ENCODE measurements at regions of chr21 and their contacts with region 1.

Region 1: GRCh38 chr21:29351691-29352090 is 53.0 kb downstream of the BACH1 start:
- DNase-seq: no peak
- ATAC-seq: no peak
- H3K4me3 ChIP-seq: no peak overlapping the region
- H3K27ac ChIP-seq: no peak overlapping the region
- H3K4me1 ChIP-seq: no peaks in the 10 kb centered on the region
- CTCF ChIP-seq: no peak
- EP300 ChIP-seq: no peak
- POLR2A ChIP-seq: no peak
- RAD21 ChIP-seq: no peak

Region 2: DNA sequence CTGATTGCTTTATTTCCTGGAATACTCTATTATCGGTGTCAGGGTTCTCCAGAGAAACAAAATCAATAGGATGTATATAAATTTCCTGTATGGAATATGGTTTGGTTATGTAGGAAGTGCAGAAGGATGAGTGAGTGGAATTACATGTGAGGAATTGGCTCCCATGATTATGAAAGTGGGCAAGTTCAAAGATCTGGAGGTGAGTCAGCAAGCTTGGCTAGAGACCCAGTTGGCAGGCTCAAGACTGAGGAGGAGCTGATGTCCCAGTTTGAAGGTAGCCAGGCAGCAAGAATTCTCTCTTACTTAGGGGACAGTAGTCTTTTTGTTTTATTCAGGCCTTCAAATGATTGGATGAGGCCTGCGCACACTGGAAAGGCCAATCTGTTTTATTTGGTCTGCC is 163.7 kb before region 1 on chr21:
- CTCF ChIA-PET with region 1: interaction called, 15 read pairs
- POLR2A ChIA-PET with region 1: no interaction called
- DNase-seq: peak in 1 of 2 experiments; percentile 65
- ATAC-seq: peak; percentile 73 to 81
- H3K4me3 ChIP-seq: no peak overlapping the region
- H3K27ac ChIP-seq: peak overlapping the region; percentile 53 to 77; a peak in 5 of 6 replicates
- H3K4me1 ChIP-seq: peaks cover 52% of the 10 kb centered on the region
- CTCF ChIP-seq: no peak
- EP300 ChIP-seq: no peak
- POLR2A ChIP-seq: no peak
- RAD21 ChIP-seq: no peak

Region 3: GRCh38 chr21:29334712-29335428 is 16.8 kb before region 1 on chr21:
- CTCF ChIA-PET with region 1: interaction called, 28 read pairs
- POLR2A ChIA-PET with region 1: no interaction called
- DNase-seq: no peak
- ATAC-seq: no peak
- H3K4me3 ChIP-seq: no peak overlapping the region
- H3K27ac ChIP-seq: no peak overlapping the region
- H3K4me1 ChIP-seq: peaks cover 12% of the 10 kb centered on the region; the same call in 2 of the 3 replicates
- CTCF ChIP-seq: no peak
- EP300 ChIP-seq: no peak
- POLR2A ChIP-seq: no peak
- RAD21 ChIP-seq: no peak